Activated T-helper 2 cell treated with anti-CD3 and anti-CD28 coated beads, Interferon-gamma antibody, Interleukin-2, Interleukin-4, amounts not matched to agents 10 μg/mL and 5 μg/mL and 100 μg/mL, durations not matched to agents 14 hours and 24 hours and 36 hours (primary cell): ENCODE measurements at regions of chr5 and their contacts with region 1.

Region 1: GRCh38 chr5:96067894-96068614 is 106.4 kb upstream of the ELL2 start:
- DNase-seq: no peak
- H3K4me3 Mint-ChIP-seq: peak overlapping the region; percentile 19
- H3K27ac Mint-ChIP-seq: peak overlapping the region; percentile 91
- H3K4me1 Mint-ChIP-seq: peaks cover 74% of the 10 kb centered on the region
- H3K27me3 Mint-ChIP-seq: no peaks in the 10 kb centered on the region

Region 2: DNA sequence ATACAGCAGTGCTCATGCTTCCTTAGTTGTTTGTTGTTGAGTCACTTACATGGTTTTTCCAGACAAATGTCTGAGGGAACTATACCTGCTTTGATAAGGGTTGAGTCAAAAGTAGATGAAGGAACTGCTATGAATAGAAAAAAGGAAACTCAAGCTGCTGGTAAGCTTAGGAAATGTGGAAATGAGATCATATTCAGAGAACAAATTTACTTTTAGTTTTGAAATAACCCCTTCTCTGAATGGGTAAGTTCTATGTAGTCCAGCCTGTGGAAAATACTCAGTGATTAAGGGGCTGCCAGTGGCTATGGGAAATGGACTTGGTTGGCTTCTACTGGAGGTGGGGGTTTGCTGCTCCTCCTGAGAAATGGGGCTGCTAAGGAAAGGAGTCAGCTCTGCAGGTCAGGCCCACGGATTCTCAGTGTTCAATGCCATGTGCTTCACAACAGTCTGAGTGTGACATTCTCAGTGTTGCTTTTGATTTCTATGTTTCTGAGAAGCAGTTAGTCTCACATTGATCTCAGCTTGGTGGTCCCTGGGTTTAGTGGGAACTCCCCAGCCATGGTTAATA is 197.9 kb before region 1 on chr5:
- intact Hi-C with region 1: loop called (anchors 2 kb)
- DNase-seq: peak; percentile 28
- H3K4me3 Mint-ChIP-seq: peak overlapping the region; percentile 37
- H3K27ac Mint-ChIP-seq: peak overlapping the region; percentile 89
- H3K4me1 Mint-ChIP-seq: peaks cover 45% of the 10 kb centered on the region
- H3K27me3 Mint-ChIP-seq: peaks cover 4% of the 10 kb centered on the region

Region 3: GRCh38 chr5:95927927-95928723 is 139.9 kb before region 1 on chr5:
- intact Hi-C with region 1: loop called (anchors 5 kb)
- DNase-seq: no peak
- H3K4me3 Mint-ChIP-seq: peak overlapping the region; percentile 5
- H3K27ac Mint-ChIP-seq: peak overlapping the region; percentile 85
- H3K4me1 Mint-ChIP-seq: peaks cover 64% of the 10 kb centered on the region
- H3K27me3 Mint-ChIP-seq: no peaks in the 10 kb centered on the region

Region 4: DNA sequence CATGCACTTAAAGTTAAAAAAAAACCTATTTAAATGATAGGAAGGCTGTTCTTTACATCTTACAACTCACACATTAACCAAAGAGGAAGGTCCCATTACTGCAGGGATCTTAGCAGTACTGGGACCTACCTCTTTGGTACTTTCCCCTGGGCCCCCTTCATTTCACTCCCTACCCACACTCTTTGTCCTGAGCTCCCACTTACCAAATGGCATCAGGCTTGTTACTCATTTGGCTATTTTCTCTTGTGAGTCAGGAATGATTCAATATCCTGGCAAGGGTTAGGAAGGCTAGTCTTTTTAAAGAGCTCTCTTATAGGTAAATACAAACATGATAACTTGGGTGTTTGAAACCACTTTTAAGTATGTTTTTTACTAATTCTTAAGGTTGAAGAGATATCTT is 11.0 kb after region 1 on chr5:
- intact Hi-C with region 1: loop called (anchors 1 kb)
- DNase-seq: no peak
- H3K4me3 Mint-ChIP-seq: no peak overlapping the region
- H3K27ac Mint-ChIP-seq: peak overlapping the region; percentile 76
- H3K4me1 Mint-ChIP-seq: peaks cover 64% of the 10 kb centered on the region
- H3K27me3 Mint-ChIP-seq: no peaks in the 10 kb centered on the region

Region 5: GRCh38 chr5:96220610-96221390 is 152.7 kb after region 1 on chr5:
- intact Hi-C with region 1: loop called (anchors 5 kb)
- DNase-seq: no peak
- H3K4me3 Mint-ChIP-seq: no peak overlapping the region
- H3K27ac Mint-ChIP-seq: peak overlapping the region; percentile 64
- H3K4me1 Mint-ChIP-seq: peaks cover 15% of the 10 kb centered on the region
- H3K27me3 Mint-ChIP-seq: no peaks in the 10 kb centered on the region